ENCODE measurements at regions of chr16 and their contacts with region 1.

Region 1: GRCh38 chr16:2251483-2252240 is at the start of gene ECI1:
- DNase-seq: peak; percentile 96
- H3K4me3 ChIP-seq: peak within 1 kb of the TSS; percentile 70 to 91
- H3K27ac ChIP-seq: peak within 1 kb of the TSS; percentile 55 to 88
- H3K4me1 ChIP-seq: peaks cover 14% of the 10 kb centered on the region
- H3K27me3 ChIP-seq: no peaks in the 10 kb centered on the region
- CTCF ChIP-seq: peak; percentile 63 to 88 (median 72)
- POLR2A ChIP-seq: no peak
- total RNA-seq, gene ECI1: 36.1 to 39.0 TPM

Region 2: GRCh38 chr16:2155091-2156021 is 96.3 kb before region 1 on chr16 and contains the start of gene TRAF7:
- intact Hi-C with region 1: loop called (anchors 10 kb)
- DNase-seq: peak; percentile 100
- H3K4me3 ChIP-seq: peak within 1 kb of the TSS; percentile 79 to 86
- H3K27ac ChIP-seq: peak within 1 kb of the TSS; percentile 72 to 89
- H3K4me1 ChIP-seq: peaks cover 61% of the 10 kb centered on the region
- H3K27me3 ChIP-seq: no peaks in the 10 kb centered on the region
- CTCF ChIP-seq: no peak
- POLR2A ChIP-seq: peak; percentile 99
- total RNA-seq, gene TRAF7: 36.0 to 46.1 TPM

Region 3: DNA sequence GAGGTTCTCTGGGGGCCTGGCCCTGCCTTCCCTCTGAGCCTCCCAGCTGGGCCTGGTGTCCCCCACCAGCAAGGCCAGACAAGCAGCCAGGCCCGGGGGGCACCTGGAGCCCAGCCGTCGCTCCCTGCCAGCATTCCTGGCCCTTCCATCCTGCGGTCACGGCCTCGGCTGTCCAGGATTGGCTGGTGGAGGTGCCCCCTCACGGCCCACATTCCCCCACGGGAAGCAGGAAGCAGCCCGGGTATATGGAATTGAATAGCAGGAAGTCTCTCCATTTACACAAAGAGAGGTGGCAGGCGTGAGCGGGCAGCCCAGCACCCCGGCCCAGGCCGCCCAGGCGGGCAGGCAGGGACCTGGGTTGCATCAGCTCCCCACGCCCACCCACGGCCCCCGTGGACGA is 81.6 kb before region 1 on chr16:
- intact Hi-C with region 1: no loop called
- DNase-seq: no peak
- H3K4me3 ChIP-seq: no peak overlapping the region
- H3K27ac ChIP-seq: peak overlapping the region; percentile 39 to 41
- H3K4me1 ChIP-seq: no peaks in the 10 kb centered on the region
- H3K27me3 ChIP-seq: no peaks in the 10 kb centered on the region
- CTCF ChIP-seq: no peak
- POLR2A ChIP-seq: no peak

Region 4: DNA sequence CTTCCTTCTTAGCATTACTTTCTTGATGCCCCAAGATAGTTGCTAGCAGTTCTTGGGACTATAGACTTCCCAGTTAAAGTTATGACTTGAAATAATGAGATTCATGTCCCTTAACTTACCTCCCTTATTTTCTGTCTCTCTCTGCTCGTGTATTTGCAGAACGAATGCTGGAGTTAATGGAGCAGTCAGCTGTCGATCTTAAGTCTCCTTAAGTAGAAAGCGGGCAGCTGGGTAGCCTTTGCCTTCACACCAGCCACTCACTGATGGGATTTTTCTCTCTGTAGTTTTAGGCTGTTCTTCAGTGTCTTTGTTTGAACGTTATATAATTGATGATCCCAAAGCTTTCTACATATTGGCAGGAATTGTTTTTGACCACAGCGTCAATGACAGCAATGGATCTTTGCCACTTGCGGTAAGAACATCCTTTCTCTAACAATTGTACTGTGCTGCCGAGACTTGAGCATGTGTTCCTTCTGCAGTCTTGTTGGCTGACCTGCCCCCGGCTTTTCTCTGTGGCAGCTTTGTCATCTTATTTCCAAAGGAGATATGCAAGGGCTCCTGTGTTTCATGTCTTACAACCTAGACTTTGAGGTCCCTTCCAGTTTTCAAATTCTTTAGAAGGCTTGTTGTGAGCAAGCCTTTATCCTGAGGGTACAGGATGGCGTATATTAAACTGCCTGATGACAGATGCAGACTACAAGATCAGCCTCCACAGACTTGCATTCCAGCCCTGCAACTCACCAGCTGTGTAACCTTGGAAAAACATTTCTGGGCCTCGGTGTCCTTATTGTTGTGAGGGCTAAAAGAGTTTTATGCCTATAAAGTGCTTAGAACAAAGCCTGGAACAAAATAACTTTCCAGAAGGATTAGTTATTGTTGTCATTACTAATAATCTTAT is 114.0 kb after region 1 on chr16:
- intact Hi-C with region 1: no loop called
- DNase-seq: peak; percentile 51
- H3K4me3 ChIP-seq: no peak overlapping the region
- H3K27ac ChIP-seq: peak overlapping the region in 1 of 2 donors; percentile 68
- H3K4me1 ChIP-seq: peaks cover 37% of the 10 kb centered on the region
- H3K27me3 ChIP-seq: no peaks in the 10 kb centered on the region
- CTCF ChIP-seq: no peak
- POLR2A ChIP-seq: no peak

Measured in testis (tissue), 5 donors.